AG04449 (cell line): ENCODE measurements at regions of chr18 and their contacts with region 1.

Region 1: DNA sequence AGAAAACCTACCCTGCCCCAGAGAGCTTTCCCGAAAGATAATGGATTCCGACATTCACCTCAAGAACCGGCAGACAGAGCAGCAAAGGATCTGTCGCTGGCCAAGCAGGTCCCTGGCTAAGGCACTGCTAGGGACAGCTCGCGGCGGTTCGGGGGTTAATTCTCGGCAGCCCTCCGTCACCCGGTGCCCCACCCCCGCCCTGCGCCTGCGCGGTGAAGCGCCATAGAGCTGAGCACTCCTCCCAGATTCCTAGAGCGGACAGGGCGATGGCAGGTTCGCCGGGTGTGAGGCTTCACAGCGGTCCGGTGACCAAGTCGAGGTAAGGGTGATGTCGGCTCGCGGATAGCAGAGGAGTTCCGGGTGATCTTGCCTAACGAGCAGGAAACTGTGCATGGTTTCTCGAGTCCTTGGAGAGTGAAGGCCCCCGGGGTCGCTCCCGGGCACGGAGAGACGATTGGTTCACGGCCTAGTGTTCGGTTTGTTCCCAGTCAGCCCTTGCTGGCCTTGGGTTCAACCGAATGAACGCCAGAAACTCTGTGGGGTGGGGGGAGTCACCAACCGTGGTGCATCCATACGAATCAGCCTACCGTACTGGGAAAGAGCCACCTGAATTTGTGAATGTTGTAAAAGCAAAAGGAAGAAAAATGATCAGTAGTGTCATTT is at the start of gene ZSCAN30:
- DNase-seq: peak; percentile 66
- H3K4me3 ChIP-seq: peak within 1 kb of the TSS; percentile 82
- CTCF ChIP-seq: no peak

Region 2: GRCh38 chr18:34990571-34990970 is 299.6 kb before region 1 on chr18:
- CTCF ChIA-PET with region 1: no interaction called
- POLR2A ChIA-PET with region 1: no interaction called
- DNase-seq: no peak
- H3K4me3 ChIP-seq: no peak overlapping the region
- CTCF ChIP-seq: no peak

Region 3: GRCh38 chr18:35240664-35241447 is 49.3 kb before region 1 on chr18 and contains the start of gene ZNF397:
- CTCF ChIA-PET with region 1: no interaction called
- POLR2A ChIA-PET with region 1: interaction called, 10 read pairs
- DNase-seq: peak; percentile 69
- H3K4me3 ChIP-seq: peak within 1 kb of the TSS; percentile 77
- CTCF ChIP-seq: no peak

Region 4: DNA sequence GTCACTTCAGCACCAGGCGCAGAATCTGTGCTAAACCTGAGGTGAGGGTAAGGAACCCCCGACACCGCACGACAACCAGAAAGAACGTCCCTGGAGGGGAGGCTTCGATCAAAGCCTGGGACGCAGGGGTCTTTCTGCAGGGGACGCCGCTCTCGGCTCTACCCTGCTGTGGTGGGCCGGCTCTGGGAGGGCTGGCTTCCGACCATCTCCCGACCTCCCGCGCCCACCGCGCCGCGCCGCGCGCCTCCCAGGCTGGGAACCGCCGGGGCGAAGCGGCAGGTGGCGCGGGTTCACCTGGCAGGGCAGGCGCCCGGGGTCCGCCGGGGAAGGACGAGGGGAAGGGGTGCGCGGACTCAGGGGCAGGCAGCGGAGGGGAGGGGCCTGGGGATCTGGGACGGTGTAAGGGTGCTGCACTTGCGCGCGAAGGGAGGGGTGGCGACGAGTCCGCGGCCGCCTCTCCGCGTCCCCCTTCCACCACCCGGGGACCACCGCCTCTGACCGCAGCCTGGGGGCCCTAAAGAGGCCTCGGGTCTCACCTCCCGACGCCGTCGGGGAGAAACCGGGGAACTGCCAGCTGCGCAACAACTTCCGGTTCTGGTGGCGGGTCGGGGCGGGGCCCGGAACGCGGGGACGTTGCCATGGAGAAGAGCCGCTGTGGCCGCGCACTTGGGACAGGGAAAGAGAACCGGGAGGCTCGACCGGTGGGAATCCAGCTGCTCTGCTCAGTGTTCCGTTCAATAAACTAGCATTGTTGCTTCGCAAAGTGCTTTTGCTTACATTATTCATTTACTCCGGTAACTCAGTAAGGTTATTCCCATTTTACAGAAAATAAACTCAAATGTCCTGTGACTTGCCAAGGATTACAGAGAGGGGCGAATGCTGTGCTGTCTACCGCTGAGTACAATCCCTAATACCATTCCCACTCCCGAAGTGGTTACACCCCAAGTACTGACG is 86.8 kb after region 1 on chr18 and contains the start of gene ZNF396:
- CTCF ChIA-PET with region 1: no interaction called
- POLR2A ChIA-PET with region 1: no interaction called
- DNase-seq: no peak
- H3K4me3 ChIP-seq: peak within 1 kb of the TSS; percentile 69
- CTCF ChIP-seq: no peak